Gastrocnemius medialis (tissue), 4 donors: ENCODE measurements at regions of chr14 and their contacts with region 1.

Region 1: DNA sequence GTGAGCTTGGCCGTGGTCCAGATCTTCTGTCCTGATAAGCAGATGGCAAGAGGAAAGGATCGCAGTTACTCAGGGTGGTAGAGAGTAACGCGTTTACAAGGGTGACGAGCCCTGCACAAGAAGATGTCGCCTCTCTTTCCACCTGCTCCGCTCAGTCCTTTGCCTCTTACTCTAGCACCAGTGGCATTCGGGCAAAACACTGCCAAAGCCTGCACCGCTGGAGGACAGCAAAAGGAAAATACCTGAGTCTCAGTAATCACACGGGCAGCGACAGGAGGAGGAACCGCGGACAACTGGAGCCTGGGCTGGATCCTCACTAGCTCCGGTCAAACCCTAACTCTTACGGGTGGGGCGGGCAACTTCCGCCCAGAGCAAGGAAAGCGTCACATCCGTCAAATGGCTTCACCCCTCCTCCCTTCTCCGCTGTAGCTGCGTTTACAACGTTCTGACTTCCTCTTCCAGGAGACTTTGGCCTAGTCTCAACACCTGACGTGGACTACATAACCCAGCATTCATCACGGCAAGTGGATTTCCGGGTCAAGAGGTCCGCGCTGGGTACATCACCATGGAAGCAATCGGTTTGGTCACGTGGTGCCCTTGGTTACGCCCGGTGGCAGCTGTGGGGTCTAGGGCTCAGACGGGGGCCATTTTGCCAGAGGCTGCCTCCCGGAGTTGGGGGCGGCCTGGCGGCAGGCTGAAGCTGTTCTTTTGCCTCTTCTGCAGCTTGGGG is at the starts of genes KLHL28 and TOGARAM1:
- DNase-seq: peak; percentile 99
- ATAC-seq: peak; percentile 97 to 98
- H3K4me3 ChIP-seq: peak within 1 kb of the TSS; percentile 82 to 92 (median 90)
- H3K27ac ChIP-seq: peak within 1 kb of the TSS; percentile 88 to 95 (median 91)
- H3K4me1 ChIP-seq: peaks cover 70 to 77% of the 10 kb centered on the region in 2 donors
- H3K27me3 ChIP-seq: no peaks in the 10 kb centered on the region
- CTCF ChIP-seq: no peak
- POLR2A ChIP-seq: peak; percentile 74 to 83
- total RNA-seq, gene KLHL28: 7.3 to 11.9 (median 8.2) TPM
- total RNA-seq, gene TOGARAM1: 6.3 to 19.1 (median 9.7) TPM

Region 2: GRCh38 chr14:44897045-44897844 is 64.5 kb before region 1 on chr14:
- in situ Hi-C with region 1: loop called in 3 of 4 experiments (anchors 5 to 10 kb)
- intact Hi-C with region 1: loop called (anchors 1 kb)
- DNase-seq: peak; percentile 97 to 99
- ATAC-seq: peak; percentile 97
- H3K4me3 ChIP-seq: peak overlapping the region; percentile 62 to 86 (median 67)
- H3K27ac ChIP-seq: peak overlapping the region; percentile 83 to 99 (median 92)
- H3K4me1 ChIP-seq: peaks cover 17% of the 10 kb centered on the region in 2 donors
- H3K27me3 ChIP-seq: no peaks in the 10 kb centered on the region
- CTCF ChIP-seq: peak in 1 of 5 experiments; percentile 8
- POLR2A ChIP-seq: peak; percentile 65 to 83

Region 3: DNA sequence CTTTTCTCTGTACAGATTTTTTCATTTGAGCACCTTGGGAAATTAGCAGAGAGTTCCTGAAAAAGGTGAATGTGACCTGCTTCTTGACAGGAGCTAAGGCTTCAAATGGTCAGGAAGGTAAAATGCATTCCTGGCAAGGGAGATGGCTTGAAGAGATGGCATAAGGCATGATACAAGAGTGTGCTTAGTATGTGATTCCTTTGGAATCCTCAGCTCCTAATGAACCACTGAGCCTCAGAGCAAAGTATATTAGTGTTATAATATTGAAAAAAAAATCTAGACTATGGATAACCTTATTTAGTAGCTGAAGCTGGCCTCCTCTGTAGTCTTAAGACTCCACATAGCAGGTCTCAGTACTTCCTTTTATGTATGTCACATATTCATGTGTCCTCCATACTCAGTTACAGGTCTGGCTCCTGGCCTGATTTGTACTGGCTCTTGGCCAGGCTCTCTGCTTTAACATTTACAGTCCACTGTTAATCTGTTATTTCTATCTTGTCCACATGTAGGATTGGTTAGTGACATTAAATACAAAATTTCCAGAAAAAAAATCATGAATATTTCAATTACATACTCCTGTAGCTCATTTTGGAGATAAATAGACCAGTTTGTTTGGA is 18.1 kb after region 1 on chr14:
- in situ Hi-C with region 1: no loop called
- intact Hi-C with region 1: loop called (anchors 2 kb)
- DNase-seq: peak in 1 of 2 donors; percentile 45
- ATAC-seq: peak; percentile 75 to 81
- H3K4me3 ChIP-seq: no peak overlapping the region
- H3K27ac ChIP-seq: peak overlapping the region in 3 of 4 donors; percentile 10 to 61 (median 20)
- H3K4me1 ChIP-seq: peaks cover 19 to 25% of the 10 kb centered on the region in 2 donors
- H3K27me3 ChIP-seq: no peaks in the 10 kb centered on the region
- CTCF ChIP-seq: no peak
- POLR2A ChIP-seq: no peak

Region 4: GRCh38 chr14:45083971-45084722 is 122.4 kb after region 1 on chr14 and contains the start of gene PRPF39:
- in situ Hi-C with region 1: no loop called
- intact Hi-C with region 1: loop called (anchors 1 kb)
- DNase-seq: peak; percentile 92 to 94
- ATAC-seq: peak; percentile 96
- H3K4me3 ChIP-seq: peak within 1 kb of the TSS; percentile 71 to 93 (median 74)
- H3K27ac ChIP-seq: peak within 1 kb of the TSS; percentile 86 to 95 (median 90)
- H3K4me1 ChIP-seq: peaks cover 30 to 42% of the 10 kb centered on the region in 2 donors
- H3K27me3 ChIP-seq: no peaks in the 10 kb centered on the region
- CTCF ChIP-seq: no peak
- POLR2A ChIP-seq: peak; percentile 85 to 86
- total RNA-seq, gene PRPF39: 11.9 to 22.7 (median 13.7) TPM

Region 5: DNA sequence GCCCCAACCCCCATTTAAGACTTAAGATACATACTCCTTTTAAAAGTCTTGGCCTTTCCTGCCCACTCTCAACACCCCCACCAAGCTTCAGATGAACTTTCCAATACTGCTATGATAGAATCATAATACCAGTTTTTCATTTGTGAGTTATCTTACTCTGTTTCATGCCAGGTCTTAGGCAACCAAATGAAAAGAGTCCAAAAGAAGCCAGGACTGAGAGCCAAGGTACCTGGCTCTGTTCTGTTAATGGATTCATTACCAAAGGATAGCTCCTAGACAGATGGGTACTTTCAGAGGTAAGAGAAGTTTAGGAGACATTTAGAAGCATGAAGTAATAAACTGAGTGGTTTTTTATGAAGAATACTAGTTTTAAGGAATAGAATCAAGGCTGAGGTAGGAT is 208.1 kb after region 1 on chr14:
- in situ Hi-C with region 1: no loop called
- intact Hi-C with region 1: no loop called
- DNase-seq: no peak
- ATAC-seq: no peak
- H3K4me3 ChIP-seq: no peak overlapping the region
- H3K27ac ChIP-seq: no peak overlapping the region
- H3K4me1 ChIP-seq: no peaks in the 10 kb centered on the region
- H3K27me3 ChIP-seq: no peaks in the 10 kb centered on the region
- CTCF ChIP-seq: no peak
- POLR2A ChIP-seq: no peak

Region 6: DNA sequence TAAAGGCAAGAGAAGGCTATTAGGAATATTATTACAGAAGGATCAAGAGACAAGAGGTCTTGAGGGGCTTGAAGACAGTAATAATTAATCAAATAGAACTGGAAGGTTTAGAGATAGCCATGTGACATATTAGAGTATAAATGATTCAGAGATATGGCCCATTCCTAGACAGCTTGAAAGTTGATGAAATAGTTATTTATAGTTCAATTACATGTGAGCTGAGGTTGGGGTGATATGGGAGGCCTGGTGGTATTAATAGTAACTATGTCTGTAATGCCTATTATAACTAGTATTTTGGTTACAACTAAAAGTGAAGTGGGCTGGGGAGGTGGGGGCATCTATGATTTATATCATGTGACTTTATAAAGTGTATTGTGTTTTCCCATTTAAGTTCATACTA is 305.3 kb after region 1 on chr14:
- in situ Hi-C with region 1: no loop called
- intact Hi-C with region 1: loop called (anchors 5 kb)
- DNase-seq: no peak
- ATAC-seq: peak; percentile 86 to 94
- H3K4me3 ChIP-seq: no peak overlapping the region
- H3K27ac ChIP-seq: peak overlapping the region in 3 of 4 donors; percentile 16 to 45 (median 35)
- H3K4me1 ChIP-seq: peaks cover 6 to 11% of the 10 kb centered on the region in 2 donors
- H3K27me3 ChIP-seq: no peaks in the 10 kb centered on the region
- CTCF ChIP-seq: no peak
- POLR2A ChIP-seq: no peak